Calu3 (cell line): ENCODE measurements at regions of chr13 and their contacts with region 1.

Region 1: DNA sequence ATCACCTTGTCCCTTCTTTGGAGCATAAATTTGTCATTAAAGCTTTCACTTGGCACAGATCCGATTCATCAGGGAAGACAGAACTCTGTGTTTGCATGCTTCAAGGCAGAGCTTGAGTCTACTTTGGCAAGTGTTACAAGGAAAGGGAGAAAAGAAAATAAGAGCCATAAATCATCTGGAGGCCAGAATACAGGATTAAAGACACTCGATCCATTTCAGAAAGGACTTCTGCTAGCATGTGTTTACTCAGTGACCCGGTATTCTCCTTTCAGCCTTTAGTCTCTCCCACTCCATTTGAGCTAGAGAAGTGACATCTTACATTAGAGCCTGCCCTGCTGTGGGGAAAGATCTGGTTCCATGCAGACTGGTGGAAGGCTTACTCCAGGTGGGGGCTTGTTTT is 306.4 kb downstream of the KLF5 start:
- DNase-seq: peak; percentile 14
- H3K4me3 Mint-ChIP-seq: peak overlapping the region; percentile 19
- H3K27ac Mint-ChIP-seq: no peak overlapping the region
- H3K4me1 Mint-ChIP-seq: no peaks in the 10 kb centered on the region
- H3K27me3 Mint-ChIP-seq: no peaks in the 10 kb centered on the region
- CTCF ChIP-seq: no peak

Region 2: GRCh38 chr13:72504131-72504841 is 861.0 kb before region 1 on chr13:
- CTCF ChIA-PET with region 1: no interaction called
- intact Hi-C with region 1: no loop called
- DNase-seq: no peak
- H3K4me3 Mint-ChIP-seq: no peak overlapping the region
- H3K27ac Mint-ChIP-seq: no peak overlapping the region
- H3K4me1 Mint-ChIP-seq: no peaks in the 10 kb centered on the region
- H3K27me3 Mint-ChIP-seq: no peaks in the 10 kb centered on the region
- CTCF ChIP-seq: no peak

Region 3: GRCh38 chr13:73171926-73172325 is 193.3 kb before region 1 on chr13:
- CTCF ChIA-PET with region 1: no interaction called
- intact Hi-C with region 1: loop called (anchors 2 kb)
- DNase-seq: no peak
- H3K4me3 Mint-ChIP-seq: no peak overlapping the region
- H3K27ac Mint-ChIP-seq: peak overlapping the region; percentile 68
- H3K4me1 Mint-ChIP-seq: peaks cover 20% of the 10 kb centered on the region
- H3K27me3 Mint-ChIP-seq: no peaks in the 10 kb centered on the region
- CTCF ChIP-seq: no peak

Region 4: DNA sequence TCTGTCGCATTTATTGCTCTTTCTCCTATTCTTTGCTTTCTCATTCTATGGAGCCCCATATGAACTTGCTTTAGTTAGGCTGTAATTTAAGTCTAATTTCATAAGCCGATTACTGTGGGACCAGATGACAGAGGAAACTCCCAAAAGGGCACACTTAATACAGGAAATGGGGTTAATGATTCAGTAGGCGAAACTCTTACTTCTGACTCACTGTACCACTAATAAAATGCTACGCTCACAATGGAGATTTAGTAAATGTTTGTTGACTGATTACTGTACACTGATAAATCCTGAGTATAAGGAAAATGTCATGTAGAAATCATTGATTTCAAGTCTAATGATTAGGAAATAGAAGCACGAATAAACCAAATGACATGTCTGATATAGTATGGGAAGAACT is 30.0 kb before region 1 on chr13:
- CTCF ChIA-PET with region 1: interaction called, 3 read pairs
- intact Hi-C with region 1: loop called (anchors 2 kb)
- DNase-seq: no peak
- H3K4me3 Mint-ChIP-seq: peak overlapping the region; percentile 43
- H3K27ac Mint-ChIP-seq: peak overlapping the region; percentile 97
- H3K4me1 Mint-ChIP-seq: no peaks in the 10 kb centered on the region
- H3K27me3 Mint-ChIP-seq: no peaks in the 10 kb centered on the region
- CTCF ChIP-seq: no peak

Region 5: DNA sequence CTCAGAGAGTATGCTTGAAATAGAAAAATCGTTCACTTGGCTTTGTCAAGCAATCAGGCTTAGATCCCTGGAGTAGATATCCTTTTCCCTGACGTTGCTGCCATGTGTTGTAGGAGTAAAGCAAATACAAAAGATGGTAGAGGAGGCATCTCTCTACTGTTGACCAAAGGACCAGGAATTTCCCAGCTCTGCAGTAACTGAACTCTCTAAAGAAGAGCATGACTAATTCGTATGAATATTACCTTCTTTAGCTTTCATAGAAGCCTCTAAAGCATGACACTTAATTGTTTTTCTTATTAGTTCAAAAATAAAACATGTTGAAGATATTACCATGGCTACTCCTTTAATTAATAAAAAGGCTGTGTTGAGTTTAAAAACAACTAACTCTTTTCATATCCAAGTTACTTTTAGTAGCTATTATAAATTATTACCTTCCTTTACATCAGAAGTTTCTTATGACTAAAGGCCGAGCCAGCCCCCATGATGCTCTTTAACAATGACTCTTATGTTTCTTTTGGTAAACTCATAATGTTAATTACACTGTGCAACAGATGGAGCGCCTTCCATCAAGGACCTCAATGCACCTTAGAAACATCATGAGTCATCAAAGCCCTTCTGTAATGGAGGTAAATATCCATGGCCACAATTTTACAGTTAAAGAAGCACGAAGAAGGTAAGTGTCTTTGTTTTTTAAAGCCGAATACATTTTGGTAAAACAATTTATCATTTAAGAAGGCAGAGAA is 46.0 kb after region 1 on chr13:
- CTCF ChIA-PET with region 1: interaction called, 7 read pairs
- intact Hi-C with region 1: loop called (anchors 5 kb)
- DNase-seq: no peak
- H3K4me3 Mint-ChIP-seq: no peak overlapping the region
- H3K27ac Mint-ChIP-seq: no peak overlapping the region
- H3K4me1 Mint-ChIP-seq: no peaks in the 10 kb centered on the region
- H3K27me3 Mint-ChIP-seq: no peaks in the 10 kb centered on the region
- CTCF ChIP-seq: no peak

Region 6: DNA sequence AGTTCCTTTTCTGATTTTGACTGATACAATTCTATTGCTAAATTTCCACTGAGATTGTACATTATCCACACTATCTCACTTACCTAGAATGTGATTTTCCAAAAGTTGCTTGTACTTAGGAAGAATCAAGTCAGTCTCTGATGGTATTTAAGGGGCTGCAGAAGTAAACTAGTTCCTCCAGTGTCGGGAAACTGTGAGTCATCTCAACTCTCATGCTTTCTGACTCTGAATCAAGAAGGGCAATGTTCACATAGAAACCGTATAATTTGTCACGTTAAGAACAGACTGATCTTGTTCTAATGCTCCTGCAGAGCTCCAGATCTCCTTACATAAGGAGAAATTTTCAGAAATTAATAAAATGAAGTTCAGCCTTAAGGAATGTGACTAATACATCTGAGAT is 62.9 kb after region 1 on chr13:
- CTCF ChIA-PET with region 1: no interaction called
- intact Hi-C with region 1: no loop called
- DNase-seq: peak; percentile 16
- H3K4me3 Mint-ChIP-seq: no peak overlapping the region
- H3K27ac Mint-ChIP-seq: peak overlapping the region; percentile 90
- H3K4me1 Mint-ChIP-seq: peaks cover 33% of the 10 kb centered on the region
- H3K27me3 Mint-ChIP-seq: no peaks in the 10 kb centered on the region
- CTCF ChIP-seq: no peak